Mammary epithelial cell (primary cell): ENCODE measurements at regions of chr6 and their contacts with region 1.

Region 1: DNA sequence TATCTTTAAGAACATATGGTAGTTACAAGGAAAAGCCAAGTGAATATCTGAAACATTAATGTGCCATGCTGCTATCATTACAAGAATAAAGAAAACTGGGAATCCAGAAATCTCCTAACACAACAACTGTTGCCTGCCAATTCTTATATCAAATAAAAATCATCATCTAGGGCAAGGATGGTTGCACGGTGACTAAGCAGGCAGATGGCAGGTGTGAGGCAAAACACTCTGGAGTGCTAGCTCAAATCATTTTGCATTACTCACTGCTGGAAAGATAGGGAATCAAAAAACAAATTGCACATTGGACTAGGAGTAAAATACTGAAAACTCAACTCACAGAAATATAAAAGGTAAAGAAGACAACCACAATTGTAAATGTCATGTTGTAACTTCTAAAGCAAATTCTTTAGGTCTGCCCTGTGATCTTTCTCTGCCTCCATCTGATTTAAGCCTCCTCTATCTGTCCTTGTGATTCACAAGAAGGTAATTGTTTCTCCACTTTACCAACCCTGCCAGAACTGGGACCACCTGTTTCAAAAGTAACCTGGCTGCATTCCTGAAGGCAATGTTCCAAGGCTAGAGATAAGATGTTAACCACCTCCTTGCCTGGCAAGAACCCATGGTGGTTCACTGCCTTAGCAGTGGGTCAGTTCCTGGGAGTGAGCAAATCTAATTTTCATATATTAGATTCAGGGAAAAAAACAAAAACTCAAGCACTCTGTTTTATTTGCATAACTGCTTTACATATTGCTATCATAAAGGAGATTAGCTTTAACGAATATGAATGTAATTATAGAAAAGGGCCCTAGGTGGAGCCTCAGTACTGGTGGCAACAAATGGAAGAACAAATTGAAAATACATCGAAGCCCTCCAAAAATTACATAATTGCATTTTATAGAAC is 33.1 kb upstream of the LCA5 start:
- DNase-seq: peak; percentile 73
- H3K4me3 ChIP-seq: peak overlapping the region in 2 of 3 experiments; percentile 24 to 36
- H3K27ac ChIP-seq: no peak overlapping the region
- H3K4me1 ChIP-seq: peaks cover 17% of the 10 kb centered on the region
- H3K27me3 ChIP-seq: no peaks in the 10 kb centered on the region
- CTCF ChIP-seq: peak; percentile 52 to 71

Region 2: DNA sequence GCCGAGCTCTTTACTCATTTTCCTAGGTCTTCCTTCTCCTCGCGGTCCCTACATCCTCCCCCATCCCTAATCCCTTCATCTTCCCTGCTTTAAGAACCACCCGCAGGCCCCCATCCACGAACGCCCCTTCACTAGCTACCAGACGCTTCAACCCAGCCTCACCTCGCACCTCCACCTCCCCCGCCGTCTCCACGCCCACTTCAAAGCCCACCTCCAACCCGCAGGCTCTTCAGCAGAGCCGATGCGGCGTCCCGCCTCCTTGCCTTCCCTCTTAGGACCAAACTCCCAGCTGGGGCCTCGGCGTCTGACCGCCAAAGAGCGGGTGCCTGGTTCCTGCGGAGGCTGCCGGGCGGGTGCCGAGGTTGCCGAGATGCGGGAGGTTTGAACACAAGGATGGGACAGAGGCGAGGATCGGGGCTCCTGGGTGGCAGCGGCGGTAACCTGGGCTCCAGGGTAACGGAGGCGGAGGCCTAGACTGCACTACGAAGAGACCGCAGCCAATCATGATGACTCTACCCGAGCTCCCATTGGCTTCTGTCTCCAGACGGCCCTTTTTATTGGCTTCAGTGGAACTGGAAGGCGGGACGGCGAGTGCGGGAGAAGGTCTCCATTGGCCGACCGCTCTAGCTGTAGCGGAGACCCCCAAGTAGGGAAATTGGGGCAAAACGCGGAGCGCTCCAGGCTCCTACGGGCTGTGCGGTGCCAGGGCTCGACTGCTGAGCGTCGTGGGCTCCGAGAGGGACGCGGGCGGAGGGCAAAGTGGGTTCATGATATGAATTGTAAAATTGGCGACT is 33.2 kb before region 1 on chr6 and contains the start of gene LCA5:
- CTCF ChIA-PET with region 1: no interaction called
- dilution Hi-C with region 1: no loop called
- in situ Hi-C with region 1: no loop called
- intact Hi-C with region 1: loop called (anchors 2 kb)
- DNase-seq: peak; percentile 98
- H3K4me3 ChIP-seq: peak within 1 kb of the TSS; percentile 95 to 98 (median 97)
- H3K27ac ChIP-seq: peak within 1 kb of the TSS; percentile 99
- H3K4me1 ChIP-seq: no peaks in the 10 kb centered on the region
- H3K27me3 ChIP-seq: no peaks in the 10 kb centered on the region
- CTCF ChIP-seq: no peak
- total RNA-seq, gene LCA5: 4.8 to 20.0 TPM

Region 3: GRCh38 chr6:79600812-79601609 is 30.6 kb after region 1 on chr6:
- CTCF ChIA-PET with region 1: no interaction called
- dilution Hi-C with region 1: no loop called
- in situ Hi-C with region 1: no loop called
- intact Hi-C with region 1: no loop called
- DNase-seq: peak; percentile 65
- H3K4me3 ChIP-seq: no peak overlapping the region
- H3K27ac ChIP-seq: no peak overlapping the region
- H3K4me1 ChIP-seq: peaks cover 10% of the 10 kb centered on the region
- H3K27me3 ChIP-seq: no peaks in the 10 kb centered on the region
- CTCF ChIP-seq: no peak

Region 4: DNA sequence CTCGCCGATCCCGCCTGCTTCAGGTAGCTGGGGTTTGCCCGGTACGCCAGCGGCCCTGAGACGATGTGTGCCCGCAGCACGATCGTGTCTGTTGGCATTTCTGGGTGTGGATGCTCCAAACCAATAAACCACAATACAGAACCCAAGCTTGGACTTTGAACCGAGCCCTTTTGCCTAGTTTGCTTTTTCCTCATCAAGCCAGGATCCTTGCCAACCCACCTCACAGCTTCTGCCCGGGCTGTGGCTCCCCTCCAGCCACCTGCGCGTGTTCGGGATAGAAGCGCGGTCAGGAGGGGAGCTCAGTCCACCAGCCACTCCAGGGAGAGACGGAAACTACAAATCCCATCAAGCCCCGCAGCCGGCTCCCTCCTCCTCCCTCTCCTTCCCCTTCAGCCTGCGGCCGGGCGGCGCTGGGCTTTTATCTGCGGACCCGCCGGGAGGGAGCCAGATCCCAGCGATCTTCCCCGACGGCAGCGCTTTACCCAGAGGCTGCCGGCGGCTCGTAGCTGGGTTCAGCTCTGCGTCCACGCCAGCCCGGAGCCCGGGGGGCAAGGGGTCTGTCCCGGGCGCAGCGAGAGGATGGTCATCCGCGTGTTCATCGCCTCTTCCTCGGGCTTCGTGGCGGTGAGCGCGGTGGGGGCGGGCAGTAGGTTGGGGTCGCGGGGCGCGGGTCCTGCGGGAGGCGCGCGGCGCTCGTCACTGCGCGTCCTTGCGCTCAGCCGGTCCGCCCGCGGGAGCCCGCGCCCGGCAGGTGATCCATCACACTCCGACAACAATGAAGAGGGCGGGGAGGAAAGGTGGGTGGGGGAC is 60.7 kb after region 1 on chr6 and contains the start of gene SH3BGRL2:
- CTCF ChIA-PET with region 1: no interaction called
- dilution Hi-C with region 1: no loop called
- in situ Hi-C with region 1: no loop called
- intact Hi-C with region 1: loop called (anchors 2 kb)
- DNase-seq: peak; percentile 63
- H3K4me3 ChIP-seq: peak within 1 kb of the TSS; percentile 40 to 77 (median 63)
- H3K27ac ChIP-seq: no peak within 1 kb of the TSS
- H3K4me1 ChIP-seq: peaks cover 17% of the 10 kb centered on the region
- H3K27me3 ChIP-seq: no peaks in the 10 kb centered on the region
- CTCF ChIP-seq: no peak
- total RNA-seq, gene SH3BGRL2: 6.6 to 16.3 TPM

Region 5: GRCh38 chr6:79672631-79673111 is 102.3 kb after region 1 on chr6:
- CTCF ChIA-PET with region 1: interaction called, 15 read pairs
- dilution Hi-C with region 1: no loop called
- in situ Hi-C with region 1: no loop called
- intact Hi-C with region 1: loop called (anchors 1 kb)
- DNase-seq: peak; percentile 46
- H3K4me3 ChIP-seq: no peak overlapping the region
- H3K27ac ChIP-seq: peak overlapping the region; percentile 39
- H3K4me1 ChIP-seq: peaks cover 10% of the 10 kb centered on the region
- H3K27me3 ChIP-seq: no peaks in the 10 kb centered on the region
- CTCF ChIP-seq: peak; percentile 50 to 72

Region 6: DNA sequence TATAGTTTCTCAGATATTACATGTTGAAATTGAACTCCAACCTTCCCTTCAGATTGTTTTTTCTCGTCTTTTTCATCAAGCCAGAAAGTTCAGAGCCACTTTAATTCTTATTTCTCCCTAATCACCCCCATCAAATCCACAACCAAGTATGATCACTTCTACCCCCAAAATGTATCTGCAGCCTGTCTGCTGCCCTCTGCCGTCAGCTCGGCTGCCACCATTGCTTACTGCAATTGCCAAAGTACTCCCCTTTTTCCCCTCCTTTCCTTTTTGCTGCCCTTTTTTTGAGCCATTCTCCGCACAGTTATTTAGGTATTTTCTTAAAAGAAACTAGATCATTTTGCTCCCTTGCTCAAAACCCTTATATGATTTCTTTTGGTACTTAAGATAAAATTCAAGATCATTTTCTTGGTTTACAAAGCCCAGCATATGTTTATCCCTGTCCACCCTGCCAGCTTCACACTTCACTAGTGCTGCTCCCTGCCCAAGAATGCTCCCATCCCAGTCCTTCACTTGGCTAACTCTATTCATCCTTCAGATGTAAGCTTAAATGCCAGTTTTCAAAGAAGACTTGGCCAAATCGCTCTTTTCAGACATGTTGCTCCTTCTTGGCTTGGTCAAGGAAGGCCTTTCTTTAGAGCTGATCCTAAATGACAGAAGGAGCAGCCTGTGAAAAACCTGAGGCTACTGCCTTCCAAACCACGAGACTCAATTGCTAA is 124.4 kb after region 1 on chr6:
- CTCF ChIA-PET with region 1: no interaction called
- dilution Hi-C with region 1: no loop called
- in situ Hi-C with region 1: no loop called
- intact Hi-C with region 1: no loop called
- DNase-seq: no peak
- H3K4me3 ChIP-seq: no peak overlapping the region
- H3K27ac ChIP-seq: no peak overlapping the region
- H3K4me1 ChIP-seq: no peaks in the 10 kb centered on the region
- H3K27me3 ChIP-seq: no peaks in the 10 kb centered on the region
- CTCF ChIP-seq: no peak

Region 7: GRCh38 chr6:79713701-79714322 is 143.4 kb after region 1 on chr6:
- CTCF ChIA-PET with region 1: no interaction called
- dilution Hi-C with region 1: no loop called
- in situ Hi-C with region 1: no loop called
- intact Hi-C with region 1: loop called (anchors 1 kb)
- DNase-seq: peak; percentile 1
- H3K4me3 ChIP-seq: no peak overlapping the region
- H3K27ac ChIP-seq: no peak overlapping the region
- H3K4me1 ChIP-seq: no peaks in the 10 kb centered on the region
- H3K27me3 ChIP-seq: no peaks in the 10 kb centered on the region
- CTCF ChIP-seq: peak; percentile 32 to 57